Right ventricle myocardium superior (tissue), 1 donor: ENCODE measurements at regions of chr11 and their contacts with region 1.

Region 1: GRCh38 chr11:61581030-61581928 is at the start of gene SYT7:
- DNase-seq: peak; percentile 96
- ATAC-seq: peak; percentile 90
- total RNA-seq, gene SYT7: 23.7 TPM

Region 2: DNA sequence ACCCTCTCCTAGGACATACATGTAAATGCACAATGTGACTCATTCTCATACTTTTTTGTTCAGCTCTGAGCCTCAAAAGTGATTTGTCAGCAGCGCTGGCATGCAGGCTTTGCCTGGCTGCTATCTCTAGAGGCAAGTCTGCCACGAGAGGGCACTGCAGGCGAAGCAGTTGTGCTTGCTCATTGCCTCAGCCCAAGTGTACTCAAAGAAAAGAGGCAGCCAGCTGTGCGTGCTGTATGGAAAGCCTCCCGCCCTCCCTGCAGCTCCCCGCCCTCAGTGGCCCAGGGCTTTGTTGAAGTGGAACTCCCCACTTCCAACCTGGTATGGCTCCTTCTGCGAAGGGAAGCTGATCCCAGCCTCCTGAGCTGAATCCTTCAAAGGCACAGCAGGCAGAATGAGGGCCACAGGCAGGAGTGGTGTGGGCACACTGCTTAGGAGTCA is 135.0 kb before region 1 on chr11:
- intact Hi-C with region 1: loop called (anchors 2 kb)
- DNase-seq: peak; percentile 95
- ATAC-seq: peak; percentile 88

Region 3: GRCh38 chr11:61477727-61478148 is 103.5 kb before region 1 on chr11:
- intact Hi-C with region 1: loop called (anchors 10 kb)
- DNase-seq: peak; percentile 77
- ATAC-seq: peak; percentile 53

Region 4: GRCh38 chr11:61532139-61533038 is 48.9 kb before region 1 on chr11:
- intact Hi-C with region 1: loop called (anchors 5 kb)
- DNase-seq: no peak
- ATAC-seq: no peak

Region 5: DNA sequence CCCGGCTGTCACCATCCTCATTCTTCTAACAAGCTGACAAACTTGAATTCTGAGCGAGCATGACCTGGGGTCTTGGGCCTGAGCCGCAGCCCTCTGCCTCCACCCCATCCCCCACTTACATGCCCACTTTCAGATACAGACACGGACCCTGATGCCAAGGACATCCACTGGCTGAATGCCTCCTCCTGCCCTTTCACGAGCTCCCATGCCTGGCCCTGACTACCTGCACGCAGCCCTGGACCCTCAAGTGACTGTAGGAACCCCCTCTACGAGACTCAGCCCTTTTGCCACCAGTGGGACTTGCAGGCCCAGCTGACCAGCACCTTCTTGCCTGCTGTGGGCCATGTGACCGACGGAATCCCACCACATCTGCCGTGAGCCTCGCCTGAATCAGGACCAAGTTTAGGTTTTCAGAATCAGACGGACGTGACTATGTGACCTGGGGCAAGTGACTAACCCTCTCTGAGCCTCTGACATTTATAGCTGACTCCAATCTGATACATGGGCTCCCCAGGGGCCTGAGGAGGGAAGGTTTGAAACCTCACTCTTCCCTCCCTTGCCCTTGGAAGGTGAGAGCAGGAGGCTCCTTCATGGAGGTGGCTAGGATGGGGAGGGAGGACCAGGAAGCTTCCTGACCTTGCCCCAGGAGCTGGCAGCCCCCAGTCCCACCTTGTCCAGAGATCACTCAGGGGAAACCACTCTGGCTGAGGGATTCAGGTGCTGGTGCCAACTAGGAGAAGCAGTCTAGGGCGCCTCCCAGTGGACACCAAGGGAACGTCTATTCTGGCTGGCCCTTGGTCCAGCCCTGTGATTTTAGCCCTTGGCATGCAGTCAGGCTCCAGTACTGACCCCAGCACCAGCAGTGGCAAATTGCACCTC is 46.5 kb after region 1 on chr11:
- intact Hi-C with region 1: loop called (anchors 5 kb)
- DNase-seq: peak; percentile 76
- ATAC-seq: peak; percentile 89

Region 6: DNA sequence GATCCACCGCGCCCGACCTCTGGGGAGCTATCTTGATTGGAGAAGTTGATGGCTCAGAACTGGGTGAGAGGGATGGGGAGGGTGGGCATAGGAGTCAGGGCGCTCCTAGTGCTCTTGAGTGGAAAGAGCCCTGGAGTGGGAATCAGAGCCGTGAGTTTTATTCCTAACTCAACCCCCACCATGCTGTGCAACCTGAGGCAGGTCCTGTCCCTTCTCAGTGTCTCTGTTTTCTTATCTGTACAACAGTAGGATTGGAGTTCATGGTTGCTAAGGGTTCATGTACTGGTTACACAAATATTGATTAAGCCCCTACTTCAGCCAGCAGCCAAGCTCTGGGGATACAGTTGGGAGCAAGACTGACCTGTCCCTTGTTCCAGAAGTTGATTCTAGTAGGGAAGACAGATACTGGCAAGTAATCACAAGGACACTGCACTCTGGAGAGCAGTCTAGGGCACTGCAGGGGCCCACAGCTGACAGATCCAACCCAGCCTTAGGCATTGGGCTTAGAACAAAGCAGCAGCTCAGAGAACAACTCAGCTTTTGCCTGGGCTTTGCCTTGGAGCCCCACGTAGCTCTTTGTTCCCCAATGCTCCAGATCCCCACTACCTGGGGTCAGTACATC is 86.5 kb after region 1 on chr11:
- intact Hi-C with region 1: no loop called
- DNase-seq: no peak
- ATAC-seq: peak; percentile 15